ENCODE measurements at regions of chr3 and their contacts with region 1.

Region 1: GRCh38 chr3:124559881-124560574 is 170.2 kb upstream of the UMPS start:
- DNase-seq: peak; percentile 93
- H3K4me3 ChIP-seq: no peak overlapping the region
- H3K27ac ChIP-seq: peak overlapping the region; percentile 73
- H3K4me1 ChIP-seq: peaks cover 35% of the 10 kb centered on the region
- H3K27me3 ChIP-seq: no peaks in the 10 kb centered on the region
- CTCF ChIP-seq: peak; percentile 94

Region 2: DNA sequence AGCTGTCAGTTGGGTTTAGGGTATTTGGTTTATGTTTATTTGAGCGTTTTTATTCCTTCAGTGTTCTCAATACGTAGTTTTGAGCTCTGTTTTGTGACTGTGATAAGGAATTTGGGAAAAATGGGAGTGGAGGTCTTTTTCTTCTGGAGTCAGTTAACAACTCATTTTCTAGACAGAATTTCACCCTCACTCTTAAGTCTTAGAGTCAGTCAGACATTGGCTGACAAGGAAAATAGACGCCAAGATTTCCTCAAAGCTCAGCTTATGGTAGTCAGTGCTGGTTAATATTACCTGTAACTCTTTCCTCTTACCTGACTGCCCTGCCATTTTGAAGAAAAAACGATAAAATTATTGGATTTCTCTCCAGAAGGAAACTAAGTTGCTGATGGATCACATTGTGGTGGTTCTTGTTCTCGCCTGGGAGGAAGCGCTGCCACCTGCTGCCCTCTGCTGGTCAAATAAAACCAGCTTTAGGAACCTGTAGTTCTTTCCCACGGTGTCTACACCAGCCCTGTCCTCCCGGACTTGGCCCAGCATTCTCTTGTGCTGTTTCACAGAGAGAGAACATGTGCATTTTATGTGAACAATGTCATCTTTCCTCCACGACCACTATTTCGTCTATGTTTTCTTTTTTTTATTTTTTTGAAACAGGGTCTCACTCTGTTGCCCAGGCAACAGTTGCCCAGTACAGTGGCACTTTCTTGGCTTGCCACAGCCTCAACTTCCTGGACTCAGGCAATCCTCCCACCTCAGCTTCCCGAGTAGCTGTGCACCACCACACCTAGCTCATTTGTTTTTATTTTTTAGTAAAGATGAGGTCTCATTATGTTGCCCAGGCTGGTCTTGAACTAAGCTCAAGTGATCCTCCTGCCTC is 128.8 kb after region 1 on chr3:
- CTCF ChIA-PET with region 1: interaction called, 18 read pairs
- POLR2A ChIA-PET with region 1: no interaction called
- intact Hi-C with region 1: loop called (anchors 1 kb)
- DNase-seq: peak; percentile 88
- H3K4me3 ChIP-seq: no peak overlapping the region
- H3K27ac ChIP-seq: no peak overlapping the region
- H3K4me1 ChIP-seq: peaks cover 8% of the 10 kb centered on the region
- H3K27me3 ChIP-seq: no peaks in the 10 kb centered on the region
- CTCF ChIP-seq: peak; percentile 92

Region 3: DNA sequence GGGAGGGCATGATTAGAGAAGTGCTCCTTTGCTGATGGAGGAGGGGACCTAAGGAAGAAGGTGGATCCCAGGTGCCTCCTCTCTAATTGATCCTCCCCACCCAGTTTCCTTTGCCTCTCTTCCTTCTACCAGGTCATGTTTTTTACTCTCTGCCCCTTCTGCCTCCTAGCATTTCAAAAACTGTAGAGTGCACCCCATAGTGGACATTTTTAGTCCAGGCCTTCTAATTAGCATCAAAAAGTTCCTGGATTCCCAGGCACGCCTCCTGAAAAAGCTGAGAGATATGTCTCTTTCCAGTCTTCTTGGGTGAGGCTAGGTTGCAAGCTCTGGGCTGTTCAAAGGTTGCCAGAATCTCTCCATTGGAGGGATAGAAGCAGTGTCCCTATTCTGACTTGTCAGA is 345.8 kb after region 1 on chr3:
- CTCF ChIA-PET with region 1: interaction called, 4 read pairs
- POLR2A ChIA-PET with region 1: no interaction called
- intact Hi-C with region 1: loop called (anchors 2 kb)
- DNase-seq: no peak
- H3K4me3 ChIP-seq: no peak overlapping the region
- H3K27ac ChIP-seq: no peak overlapping the region
- H3K4me1 ChIP-seq: no peaks in the 10 kb centered on the region
- H3K27me3 ChIP-seq: no peaks in the 10 kb centered on the region
- CTCF ChIP-seq: no peak